Uterus (tissue), 4 donors: ENCODE measurements at regions of chr15 and their contacts with region 1.

Region 1: GRCh38 chr15:85794603-85795336 is at the start of gene KLHL25:
- DNase-seq: peak; percentile 94 to 95
- H3K4me3 ChIP-seq: peak within 1 kb of the TSS; percentile 70 to 81
- H3K27ac ChIP-seq: peak within 1 kb of the TSS; percentile 91 to 93
- H3K4me1 ChIP-seq: no peaks in the 10 kb centered on the region
- H3K27me3 ChIP-seq: no peaks in the 10 kb centered on the region
- CTCF ChIP-seq: peak in 1 of 4 experiments; percentile 12
- POLR2A ChIP-seq: peak; percentile 93
- total RNA-seq, gene KLHL25: 6.2 to 19.5 (median 11.9) TPM

Region 2: GRCh38 chr15:85737061-85737460 is 57.7 kb before region 1 on chr15:
- intact Hi-C with region 1: loop called (anchors 5 kb)
- DNase-seq: no peak
- H3K4me3 ChIP-seq: no peak overlapping the region
- H3K27ac ChIP-seq: peak overlapping the region in 1 of 2 donors; percentile 39
- H3K4me1 ChIP-seq: peaks cover 0 to 7% of the 10 kb centered on the region in 2 donors
- H3K27me3 ChIP-seq: no peaks in the 10 kb centered on the region
- CTCF ChIP-seq: no peak
- POLR2A ChIP-seq: no peak

Region 3: GRCh38 chr15:85750319-85750806 is 44.4 kb before region 1 on chr15:
- intact Hi-C with region 1: loop called (anchors 5 kb)
- DNase-seq: peak; percentile 82 to 91
- H3K4me3 ChIP-seq: peak overlapping the region; percentile 10 to 16
- H3K27ac ChIP-seq: peak overlapping the region; percentile 75 to 94
- H3K4me1 ChIP-seq: peaks cover 7 to 23% of the 10 kb centered on the region in 2 donors
- H3K27me3 ChIP-seq: no peaks in the 10 kb centered on the region
- CTCF ChIP-seq: no peak
- POLR2A ChIP-seq: peak in 1 of 2 donors; percentile 27

Region 4: GRCh38 chr15:85950101-85950500 is 155.3 kb after region 1 on chr15:
- intact Hi-C with region 1: no loop called
- DNase-seq: no peak
- H3K4me3 ChIP-seq: no peak overlapping the region
- H3K27ac ChIP-seq: no peak overlapping the region
- H3K4me1 ChIP-seq: no peaks in the 10 kb centered on the region
- H3K27me3 ChIP-seq: no peaks in the 10 kb centered on the region
- CTCF ChIP-seq: no peak
- POLR2A ChIP-seq: no peak

Region 5: DNA sequence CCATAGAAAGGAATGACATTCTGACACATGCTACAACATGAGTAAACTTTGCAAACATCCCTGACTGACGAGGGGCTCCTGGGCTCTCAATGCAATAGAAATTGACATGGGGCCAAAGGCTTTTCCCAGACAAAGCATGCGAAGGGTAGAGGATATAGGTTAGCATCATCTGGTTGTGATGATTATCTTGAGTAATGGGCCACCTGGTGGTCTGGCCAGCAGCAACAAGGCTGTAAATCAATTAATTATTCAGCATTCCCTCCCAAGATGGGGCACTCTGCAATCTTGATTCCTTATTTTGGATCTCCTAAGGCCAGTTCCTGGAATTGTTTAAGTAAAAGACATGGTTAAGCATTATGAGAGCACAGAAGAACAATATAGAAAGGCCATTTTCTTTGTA is 384.1 kb after region 1 on chr15:
- intact Hi-C with region 1: no loop called
- DNase-seq: no peak
- H3K4me3 ChIP-seq: no peak overlapping the region
- H3K27ac ChIP-seq: no peak overlapping the region
- H3K4me1 ChIP-seq: no peaks in the 10 kb centered on the region
- H3K27me3 ChIP-seq: no peaks in the 10 kb centered on the region
- CTCF ChIP-seq: no peak
- POLR2A ChIP-seq: no peak